Natural killer cell (primary cell): ENCODE measurements at regions of chr6 and their contacts with region 1.

Region 1: GRCh38 chr6:90110971-90111370 is 185.7 kb downstream of the BACH2 start:
- DNase-seq: peak; percentile 63 to 82
- ATAC-seq: peak; percentile 81 to 91 (median 81)
- H3K4me3 ChIP-seq: no peak overlapping the region
- H3K4me3 Mint-ChIP-seq: no peak overlapping the region
- H3K27ac ChIP-seq: no peak overlapping the region
- H3K27ac Mint-ChIP-seq: peak overlapping the region; percentile 21 to 37
- H3K4me1 ChIP-seq: peaks cover 28% of the 10 kb centered on the region
- H3K4me1 Mint-ChIP-seq: peaks cover 34% of the 10 kb centered on the region in 2 donors
- H3K27me3 ChIP-seq: no peaks in the 10 kb centered on the region
- H3K27me3 Mint-ChIP-seq: peaks cover 0 to 8% of the 10 kb centered on the region in 2 donors
- CTCF ChIP-seq: no peak

Region 2: DNA sequence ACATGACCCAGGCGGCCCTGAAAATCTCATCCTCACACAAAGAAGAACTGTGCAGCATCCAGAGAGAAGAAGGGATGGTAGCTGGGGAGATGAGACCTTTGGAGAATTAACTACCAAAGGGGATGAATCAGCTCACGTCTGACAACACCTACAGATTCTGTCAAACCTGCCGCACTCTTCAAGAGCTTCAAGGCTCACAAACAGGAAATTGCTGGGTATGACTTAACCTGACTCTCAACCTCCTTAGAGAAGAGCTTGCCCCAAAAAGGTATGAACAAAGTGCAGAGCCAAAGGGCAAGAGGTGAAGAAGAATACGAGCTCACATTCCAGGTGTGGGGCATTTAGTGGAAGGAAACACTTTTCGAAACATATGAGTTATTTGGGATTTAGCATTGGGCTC is 45.9 kb after region 1 on chr6:
- intact Hi-C with region 1: no loop called
- DNase-seq: peak in 1 of 2 donors; percentile 73
- ATAC-seq: peak; percentile 37 to 64 (median 58)
- H3K4me3 ChIP-seq: no peak overlapping the region
- H3K4me3 Mint-ChIP-seq: no peak overlapping the region
- H3K27ac ChIP-seq: no peak overlapping the region
- H3K27ac Mint-ChIP-seq: no peak overlapping the region
- H3K4me1 ChIP-seq: peaks cover 8% of the 10 kb centered on the region
- H3K4me1 Mint-ChIP-seq: peaks cover 9 to 11% of the 10 kb centered on the region in 2 donors
- H3K27me3 ChIP-seq: peaks cover 2% of the 10 kb centered on the region
- H3K27me3 Mint-ChIP-seq: no peaks in the 10 kb centered on the region
- CTCF ChIP-seq: no peak

Region 3: GRCh38 chr6:90179190-90180169 is 68.5 kb after region 1 on chr6:
- intact Hi-C with region 1: loop called (anchors 5 kb)
- DNase-seq: peak in 1 of 2 donors; percentile 70
- ATAC-seq: no peak
- H3K4me3 ChIP-seq: no peak overlapping the region
- H3K4me3 Mint-ChIP-seq: no peak overlapping the region
- H3K27ac ChIP-seq: no peak overlapping the region
- H3K27ac Mint-ChIP-seq: no peak overlapping the region
- H3K4me1 ChIP-seq: peaks cover 30% of the 10 kb centered on the region
- H3K4me1 Mint-ChIP-seq: peaks cover 27 to 39% of the 10 kb centered on the region in 2 donors
- H3K27me3 ChIP-seq: no peaks in the 10 kb centered on the region
- H3K27me3 Mint-ChIP-seq: no peaks in the 10 kb centered on the region
- CTCF ChIP-seq: peak; percentile 76